ENCODE measurements at regions of chr18 and their contacts with region 1.

Region 1: GRCh38 chr18:3623769-3624545 is 174.0 kb downstream of the TGIF1 start:
- DNase-seq: peak; percentile 94 to 98
- H3K4me3 ChIP-seq: peak overlapping the region; percentile 58
- H3K27ac ChIP-seq: peak overlapping the region; percentile 100
- H3K4me1 ChIP-seq: peaks cover 62% of the 10 kb centered on the region
- H3K27me3 ChIP-seq: no peaks in the 10 kb centered on the region
- CTCF ChIP-seq: no peak

Region 2: GRCh38 chr18:3466045-3466444 is 157.9 kb before region 1 on chr18:
- CTCF ChIA-PET with region 1: no interaction called
- POLR2A ChIA-PET with region 1: interaction called, 13 read pairs
- intact Hi-C with region 1: no loop called
- DNase-seq: no peak
- H3K4me3 ChIP-seq: no peak overlapping the region
- H3K27ac ChIP-seq: peak overlapping the region; percentile 25; the same call in 1 of the 2 replicates
- H3K4me1 ChIP-seq: no peaks in the 10 kb centered on the region
- H3K27me3 ChIP-seq: no peaks in the 10 kb centered on the region
- CTCF ChIP-seq: no peak

Region 3: GRCh38 chr18:3652380-3653262 is 28.7 kb after region 1 on chr18:
- CTCF ChIA-PET with region 1: no interaction called
- POLR2A ChIA-PET with region 1: interaction called, 36 read pairs
- intact Hi-C with region 1: loop called (anchors 1 kb)
- DNase-seq: peak; percentile 97 to 99
- H3K4me3 ChIP-seq: peak overlapping the region; percentile 63
- H3K27ac ChIP-seq: peak overlapping the region; percentile 99
- H3K4me1 ChIP-seq: peaks cover 80% of the 10 kb centered on the region
- H3K27me3 ChIP-seq: no peaks in the 10 kb centered on the region
- CTCF ChIP-seq: 0 out of 2 replicates have a peak, but pooled peaks have one; percentile 19

Region 4: GRCh38 chr18:3816610-3817363 is 192.8 kb after region 1 on chr18:
- CTCF ChIA-PET with region 1: interaction called, 12 read pairs
- POLR2A ChIA-PET with region 1: no interaction called
- intact Hi-C with region 1: no loop called
- DNase-seq: peak in 1 of 2 experiments; percentile 77
- H3K4me3 ChIP-seq: no peak overlapping the region
- H3K27ac ChIP-seq: peak overlapping the region; percentile 69
- H3K4me1 ChIP-seq: peaks cover 17% of the 10 kb centered on the region
- H3K27me3 ChIP-seq: no peaks in the 10 kb centered on the region
- CTCF ChIP-seq: no peak

Region 5: DNA sequence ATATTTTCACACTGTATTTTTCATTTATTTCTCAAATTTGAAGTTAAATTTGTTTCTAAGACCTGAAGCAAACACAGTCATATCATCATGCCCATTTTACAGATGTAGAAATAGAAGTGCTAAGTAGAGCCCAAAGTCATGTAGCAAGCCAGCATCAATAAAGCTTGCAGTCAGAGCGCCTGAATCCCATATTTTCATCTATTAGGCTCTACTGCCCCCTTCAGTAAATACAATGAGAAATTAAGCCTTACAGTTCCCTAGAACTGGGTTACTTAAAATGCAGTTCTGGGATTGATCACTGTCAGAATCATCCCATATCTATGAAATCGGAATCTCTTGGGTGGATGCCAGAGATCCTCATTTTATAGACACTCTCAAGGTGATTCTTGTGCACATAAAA is 245.9 kb after region 1 on chr18:
- CTCF ChIA-PET with region 1: interaction called, 13 read pairs
- POLR2A ChIA-PET with region 1: no interaction called
- intact Hi-C with region 1: no loop called
- DNase-seq: no peak
- H3K4me3 ChIP-seq: no peak overlapping the region
- H3K27ac ChIP-seq: no peak overlapping the region
- H3K4me1 ChIP-seq: no peaks in the 10 kb centered on the region
- H3K27me3 ChIP-seq: no peaks in the 10 kb centered on the region
- CTCF ChIP-seq: peak; percentile 78

Region 6: DNA sequence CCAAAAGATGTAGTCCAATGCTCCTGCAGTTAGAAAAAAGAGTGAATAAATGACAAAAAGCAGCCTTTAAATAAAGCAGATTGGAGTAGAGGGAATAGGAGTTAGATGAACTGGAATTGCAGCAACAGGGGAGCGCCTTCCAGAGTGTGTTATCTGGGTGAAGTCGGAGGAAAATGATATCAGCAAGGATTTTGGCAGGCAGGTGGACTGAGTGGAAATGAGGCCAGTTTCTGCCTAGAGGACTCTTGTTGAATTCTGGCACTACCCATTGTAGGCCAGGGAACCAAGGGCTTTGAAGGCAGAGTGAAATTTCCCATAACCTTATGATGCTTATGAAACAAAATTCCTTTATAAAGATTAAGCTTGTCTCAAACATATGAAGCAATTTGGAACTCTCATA is 1513.3 kb after region 1 on chr18:
- CTCF ChIA-PET with region 1: no interaction called
- POLR2A ChIA-PET with region 1: no interaction called
- intact Hi-C with region 1: no loop called
- DNase-seq: no peak
- H3K4me3 ChIP-seq: no peak overlapping the region
- H3K27ac ChIP-seq: no peak overlapping the region
- H3K4me1 ChIP-seq: no peaks in the 10 kb centered on the region
- H3K27me3 ChIP-seq: peaks cover 36% of the 10 kb centered on the region
- CTCF ChIP-seq: no peak